Activated B cell treated with CpG ODN at 0.5 μM for 24 hours (primary cell): ENCODE measurements at regions of chr1 and their contacts with region 1.

Region 1: GRCh38 chr1:180502360-180503273 is at the start of gene ACBD6:
- DNase-seq: peak; percentile 82
- ATAC-seq: peak; percentile 83
- H3K4me3 Mint-ChIP-seq: peak within 1 kb of the TSS; percentile 96
- H3K27ac Mint-ChIP-seq: peak within 1 kb of the TSS; percentile 98
- H3K4me1 Mint-ChIP-seq: peaks cover 30% of the 10 kb centered on the region
- H3K27me3 Mint-ChIP-seq: no peaks in the 10 kb centered on the region
- CTCF ChIP-seq: no peak
- total RNA-seq, gene ACBD6: 55.4 and 61.5 TPM in 2 replicates

Region 2: GRCh38 chr1:179575497-179576314 is 926.9 kb before region 1 on chr1 and contains the start of gene NPHS2:
- CTCF ChIA-PET with region 1: no interaction called
- POLR2A ChIA-PET with region 1: no interaction called
- intact Hi-C with region 1: no loop called
- DNase-seq: no peak
- ATAC-seq: no peak
- H3K4me3 Mint-ChIP-seq: peak within 1 kb of the TSS; percentile 25
- H3K27ac Mint-ChIP-seq: no peak within 1 kb of the TSS
- H3K4me1 Mint-ChIP-seq: peaks cover 8% of the 10 kb centered on the region
- H3K27me3 Mint-ChIP-seq: peaks cover 52% of the 10 kb centered on the region
- CTCF ChIP-seq: no peak
- total RNA-seq, gene NPHS2: not detected in 2 replicates

Region 3: DNA sequence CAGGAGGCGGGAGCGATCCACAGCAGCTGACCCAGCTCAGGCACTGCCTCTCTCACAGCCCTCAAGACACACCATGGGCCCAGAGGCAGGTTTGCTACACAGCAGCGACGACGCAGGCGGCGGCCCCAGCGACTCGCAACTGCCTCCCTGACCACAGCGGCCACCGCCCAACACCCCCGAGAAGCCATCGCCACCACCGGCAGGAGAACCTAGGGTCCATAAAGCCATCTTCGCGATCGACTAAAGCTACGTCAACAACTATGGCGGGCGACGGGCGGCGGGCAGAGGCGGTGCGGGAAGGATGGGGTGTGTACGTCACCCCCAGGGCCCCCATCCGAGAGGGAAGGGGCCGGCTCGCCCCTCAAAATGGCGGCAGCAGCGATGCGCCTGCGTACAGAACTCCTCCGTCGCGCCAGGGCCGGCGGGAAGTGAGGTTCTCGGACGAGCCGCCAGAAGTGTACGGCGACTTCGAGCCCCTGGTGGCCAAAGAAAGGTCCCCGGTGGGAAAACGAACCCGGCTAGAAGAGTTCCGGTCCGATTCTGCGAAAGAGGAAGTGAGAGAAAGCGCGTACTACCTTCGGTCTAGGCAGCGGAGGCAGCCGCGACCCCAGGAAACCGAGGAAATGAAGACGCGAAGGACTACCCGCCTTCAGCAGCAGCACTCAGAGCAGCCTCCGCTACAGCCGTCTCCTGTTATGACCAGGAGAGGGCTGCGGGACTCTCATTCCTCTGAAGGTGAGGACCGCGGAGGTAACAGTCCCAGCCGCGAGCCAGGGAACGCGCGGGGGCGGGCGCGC is 620.2 kb before region 1 on chr1 and contains the start of gene TOR1AIP1:
- CTCF ChIA-PET with region 1: no interaction called
- POLR2A ChIA-PET with region 1: interaction called, 8 read pairs
- intact Hi-C with region 1: loop called (anchors 2 kb)
- DNase-seq: peak; percentile 96
- ATAC-seq: peak; percentile 76
- H3K4me3 Mint-ChIP-seq: peak within 1 kb of the TSS; percentile 100
- H3K27ac Mint-ChIP-seq: peak within 1 kb of the TSS; percentile 100
- H3K4me1 Mint-ChIP-seq: peaks cover 64% of the 10 kb centered on the region
- H3K27me3 Mint-ChIP-seq: no peaks in the 10 kb centered on the region
- CTCF ChIP-seq: no peak
- total RNA-seq, gene TOR1AIP1: 42.3 and 46.6 TPM in 2 replicates

Region 4: GRCh38 chr1:180482425-180483275 is 20.0 kb before region 1 on chr1:
- CTCF ChIA-PET with region 1: interaction called, 6 read pairs
- POLR2A ChIA-PET with region 1: no interaction called
- intact Hi-C with region 1: loop called (anchors 2 kb)
- DNase-seq: no peak
- ATAC-seq: peak; percentile 56
- H3K4me3 Mint-ChIP-seq: no peak overlapping the region
- H3K27ac Mint-ChIP-seq: no peak overlapping the region
- H3K4me1 Mint-ChIP-seq: peaks cover 8% of the 10 kb centered on the region
- H3K27me3 Mint-ChIP-seq: no peaks in the 10 kb centered on the region
- CTCF ChIP-seq: peak; percentile 82

Region 5: DNA sequence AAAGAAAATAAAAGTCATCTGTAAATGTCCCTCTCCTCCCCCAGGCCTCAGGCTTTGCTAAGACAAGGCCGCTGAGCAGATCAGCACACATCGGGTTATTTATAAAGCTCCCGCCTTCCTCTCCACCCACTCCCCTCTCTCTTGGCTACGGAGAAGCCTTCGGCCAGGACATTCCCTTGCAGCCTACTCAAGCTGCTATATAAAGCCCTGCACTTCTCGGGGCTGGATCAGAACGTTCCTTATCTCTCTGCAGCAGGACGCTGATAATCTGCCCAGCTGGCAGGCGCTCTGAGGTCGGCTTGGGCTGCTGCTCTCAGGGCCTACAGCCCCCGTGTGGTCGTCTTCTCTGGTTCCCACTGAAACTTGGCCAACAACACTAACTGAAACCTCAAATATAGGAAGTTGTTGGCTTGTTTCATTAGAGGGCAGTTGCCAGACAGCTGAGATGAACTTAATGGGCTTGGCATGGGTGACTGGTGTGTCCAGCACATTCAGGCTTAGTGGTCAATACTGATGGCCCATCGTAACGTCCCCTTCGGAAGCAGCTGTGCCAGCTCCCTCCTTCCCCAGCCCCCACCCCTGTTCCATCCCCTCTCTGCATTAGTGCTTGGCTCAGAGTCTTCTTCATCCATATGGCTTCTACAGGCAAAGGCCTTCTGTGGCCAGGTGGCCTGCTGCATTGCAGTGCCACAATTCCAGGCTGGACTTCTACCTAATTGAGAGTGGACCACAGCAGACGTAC is 650.4 kb after region 1 on chr1:
- CTCF ChIA-PET with region 1: no interaction called
- POLR2A ChIA-PET with region 1: interaction called, 4 read pairs
- intact Hi-C with region 1: loop called (anchors 5 kb)
- DNase-seq: peak; percentile 48
- ATAC-seq: peak; percentile 86
- H3K4me3 Mint-ChIP-seq: peak overlapping the region; percentile 71
- H3K27ac Mint-ChIP-seq: peak overlapping the region; percentile 64
- H3K4me1 Mint-ChIP-seq: peaks cover 48% of the 10 kb centered on the region
- H3K27me3 Mint-ChIP-seq: no peaks in the 10 kb centered on the region
- CTCF ChIP-seq: no peak

Region 6: DNA sequence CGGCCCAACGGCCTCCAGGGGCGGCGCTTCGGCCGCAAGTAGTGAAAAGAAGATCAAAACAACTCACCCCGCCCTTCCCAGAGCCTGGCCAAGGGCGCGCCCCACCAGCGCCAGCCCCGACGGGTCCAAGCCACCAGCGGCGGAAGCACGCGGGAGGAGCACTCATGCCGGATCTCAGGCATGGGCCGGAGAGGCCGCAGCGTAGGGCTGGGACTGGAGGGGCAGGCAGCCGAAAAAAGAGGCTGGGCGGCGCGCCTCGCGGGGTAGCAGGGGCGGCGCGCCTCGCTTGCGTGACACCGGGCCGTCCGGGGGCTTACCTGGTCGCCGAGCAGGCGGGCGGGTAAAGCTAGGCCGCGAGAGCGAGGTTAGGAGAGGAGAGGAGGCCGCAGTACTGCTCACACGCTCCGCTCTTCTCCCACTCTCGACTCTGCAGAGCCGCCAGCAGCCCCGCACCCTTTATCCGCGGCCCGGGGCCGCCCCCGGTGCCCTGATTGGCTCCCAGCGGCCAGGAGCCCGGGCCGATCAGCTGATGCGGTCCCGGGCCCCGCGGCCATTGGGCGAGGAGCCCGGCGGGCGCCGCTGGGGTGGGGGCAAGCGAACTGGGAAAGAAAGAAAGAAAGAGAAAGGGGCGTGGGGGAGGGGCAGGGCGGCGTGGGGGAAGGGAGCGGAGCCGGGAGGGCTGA is 1888.9 kb after region 1 on chr1 and contains the start of gene GLUL:
- CTCF ChIA-PET with region 1: no interaction called
- POLR2A ChIA-PET with region 1: no interaction called
- intact Hi-C with region 1: loop called (anchors 10 kb)
- DNase-seq: peak; percentile 63
- ATAC-seq: peak; percentile 83
- H3K4me3 Mint-ChIP-seq: peak within 1 kb of the TSS; percentile 96
- H3K27ac Mint-ChIP-seq: peak within 1 kb of the TSS; percentile 87
- H3K4me1 Mint-ChIP-seq: peaks cover 33% of the 10 kb centered on the region
- H3K27me3 Mint-ChIP-seq: peaks cover 4% of the 10 kb centered on the region
- CTCF ChIP-seq: no peak
- total RNA-seq, gene GLUL: 36.8 and 37.8 TPM in 2 replicates